ENCODE measurements at regions of chr6 and their contacts with region 1.

Region 1: DNA sequence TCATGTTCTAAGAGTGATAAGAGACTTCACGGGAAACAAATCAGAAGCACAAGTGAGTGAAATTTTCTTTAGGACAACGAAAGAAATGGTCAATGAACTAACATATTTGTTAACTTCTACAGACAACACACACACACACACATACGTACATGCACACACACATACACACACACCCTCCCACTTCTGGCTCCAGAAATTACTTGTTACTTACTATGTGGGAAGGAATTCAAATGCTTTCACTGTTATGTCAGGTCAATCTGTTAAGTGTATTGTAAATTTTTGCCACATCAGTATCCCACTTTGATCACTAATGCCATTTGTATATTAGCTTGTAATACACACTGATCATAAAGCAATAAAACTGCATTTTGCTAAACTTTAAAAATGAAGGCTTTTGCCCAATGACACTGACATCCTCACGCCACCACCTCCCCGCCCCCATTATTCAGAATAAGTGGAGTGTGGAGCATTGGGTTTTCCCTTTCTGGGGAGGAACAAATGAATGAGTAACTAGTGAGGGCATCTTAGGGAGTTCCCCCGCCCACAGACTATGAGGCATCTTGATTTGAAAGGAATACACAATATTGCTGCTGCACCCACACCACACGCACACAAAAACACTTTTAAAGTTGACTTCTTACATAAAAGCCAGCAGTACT is 76.2 kb downstream of the ATXN1 start:
- DNase-seq: peak; percentile 89
- H3K4me3 Mint-ChIP-seq: peak overlapping the region; percentile 67
- H3K27ac Mint-ChIP-seq: peak overlapping the region; percentile 92
- H3K4me1 Mint-ChIP-seq: peaks cover 82% of the 10 kb centered on the region
- H3K27me3 Mint-ChIP-seq: no peaks in the 10 kb centered on the region

Region 2: DNA sequence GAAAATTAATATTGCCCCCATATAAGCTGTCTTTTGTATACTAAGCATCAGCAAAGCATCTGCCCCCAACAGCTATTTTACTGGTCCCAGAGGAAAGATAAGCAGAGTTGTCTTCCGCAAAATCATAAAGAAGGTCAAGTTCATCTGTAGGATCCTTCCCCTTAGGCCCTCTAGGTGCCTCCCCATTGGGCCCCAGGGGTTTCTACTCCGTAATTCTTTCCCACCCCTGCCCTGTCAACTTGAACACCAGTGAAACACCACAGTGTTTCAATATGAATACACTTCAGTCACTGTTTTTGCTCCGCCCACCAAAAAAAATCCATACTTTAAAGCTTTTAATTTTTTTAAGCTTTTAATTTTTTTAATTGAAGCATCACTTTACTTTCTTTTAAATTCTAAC is 83.0 kb before region 1 on chr6:
- intact Hi-C with region 1: loop called (anchors 5 kb)
- DNase-seq: peak; percentile 68
- H3K4me3 Mint-ChIP-seq: peak overlapping the region; percentile 9
- H3K27ac Mint-ChIP-seq: peak overlapping the region; percentile 27
- H3K4me1 Mint-ChIP-seq: peaks cover 27% of the 10 kb centered on the region
- H3K27me3 Mint-ChIP-seq: no peaks in the 10 kb centered on the region

Region 3: GRCh38 chr6:16623029-16623653 is 61.9 kb before region 1 on chr6:
- intact Hi-C with region 1: no loop called
- DNase-seq: no peak
- H3K4me3 Mint-ChIP-seq: no peak overlapping the region
- H3K27ac Mint-ChIP-seq: no peak overlapping the region
- H3K4me1 Mint-ChIP-seq: peaks cover 33% of the 10 kb centered on the region
- H3K27me3 Mint-ChIP-seq: no peaks in the 10 kb centered on the region

Region 4: GRCh38 chr6:16670183-16670582 is 14.8 kb before region 1 on chr6:
- intact Hi-C with region 1: loop called (anchors 1 kb)
- DNase-seq: no peak
- H3K4me3 Mint-ChIP-seq: peak overlapping the region; percentile 70
- H3K27ac Mint-ChIP-seq: peak overlapping the region; percentile 97
- H3K4me1 Mint-ChIP-seq: peaks cover 64% of the 10 kb centered on the region
- H3K27me3 Mint-ChIP-seq: no peaks in the 10 kb centered on the region

Region 5: GRCh38 chr6:16698997-16699868 is 14.2 kb after region 1 on chr6:
- intact Hi-C with region 1: loop called (anchors 1 kb)
- DNase-seq: peak; percentile 71
- H3K4me3 Mint-ChIP-seq: peak overlapping the region; percentile 71
- H3K27ac Mint-ChIP-seq: peak overlapping the region; percentile 95
- H3K4me1 Mint-ChIP-seq: peaks cover 68% of the 10 kb centered on the region
- H3K27me3 Mint-ChIP-seq: no peaks in the 10 kb centered on the region

Region 6: GRCh38 chr6:16731478-16732051 is 46.5 kb after region 1 on chr6:
- intact Hi-C with region 1: loop called (anchors 1 kb)
- DNase-seq: peak; percentile 80
- H3K4me3 Mint-ChIP-seq: peak overlapping the region; percentile 69
- H3K27ac Mint-ChIP-seq: peak overlapping the region; percentile 76
- H3K4me1 Mint-ChIP-seq: peaks cover 62% of the 10 kb centered on the region
- H3K27me3 Mint-ChIP-seq: no peaks in the 10 kb centered on the region